Activated CD8-positive, alpha-beta T cell treated with anti-CD3 and anti-CD28 coated beads for 36 hours (primary cell): ENCODE measurements at regions of chr3 and their contacts with region 1.

Region 1: GRCh38 chr3:58568572-58569286 is 8.5 kb downstream of the FAM107A start:
- DNase-seq: peak; percentile 83
- ATAC-seq: peak; percentile 61
- H3K4me3 Mint-ChIP-seq: no peak overlapping the region
- H3K27ac Mint-ChIP-seq: no peak overlapping the region
- H3K4me1 Mint-ChIP-seq: peaks cover 4% of the 10 kb centered on the region
- H3K27me3 Mint-ChIP-seq: peaks cover 1% of the 10 kb centered on the region
- CTCF ChIP-seq: peak; percentile 94

Region 2: GRCh38 chr3:58556761-58557221 is 11.9 kb before region 1 on chr3:
- CTCF ChIA-PET with region 1: interaction called, 49 read pairs
- POLR2A ChIA-PET with region 1: no interaction called
- intact Hi-C with region 1: no loop called
- DNase-seq: no peak
- ATAC-seq: no peak
- H3K4me3 Mint-ChIP-seq: no peak overlapping the region
- H3K27ac Mint-ChIP-seq: no peak overlapping the region
- H3K4me1 Mint-ChIP-seq: no peaks in the 10 kb centered on the region
- H3K27me3 Mint-ChIP-seq: no peaks in the 10 kb centered on the region
- CTCF ChIP-seq: no peak

Region 3: DNA sequence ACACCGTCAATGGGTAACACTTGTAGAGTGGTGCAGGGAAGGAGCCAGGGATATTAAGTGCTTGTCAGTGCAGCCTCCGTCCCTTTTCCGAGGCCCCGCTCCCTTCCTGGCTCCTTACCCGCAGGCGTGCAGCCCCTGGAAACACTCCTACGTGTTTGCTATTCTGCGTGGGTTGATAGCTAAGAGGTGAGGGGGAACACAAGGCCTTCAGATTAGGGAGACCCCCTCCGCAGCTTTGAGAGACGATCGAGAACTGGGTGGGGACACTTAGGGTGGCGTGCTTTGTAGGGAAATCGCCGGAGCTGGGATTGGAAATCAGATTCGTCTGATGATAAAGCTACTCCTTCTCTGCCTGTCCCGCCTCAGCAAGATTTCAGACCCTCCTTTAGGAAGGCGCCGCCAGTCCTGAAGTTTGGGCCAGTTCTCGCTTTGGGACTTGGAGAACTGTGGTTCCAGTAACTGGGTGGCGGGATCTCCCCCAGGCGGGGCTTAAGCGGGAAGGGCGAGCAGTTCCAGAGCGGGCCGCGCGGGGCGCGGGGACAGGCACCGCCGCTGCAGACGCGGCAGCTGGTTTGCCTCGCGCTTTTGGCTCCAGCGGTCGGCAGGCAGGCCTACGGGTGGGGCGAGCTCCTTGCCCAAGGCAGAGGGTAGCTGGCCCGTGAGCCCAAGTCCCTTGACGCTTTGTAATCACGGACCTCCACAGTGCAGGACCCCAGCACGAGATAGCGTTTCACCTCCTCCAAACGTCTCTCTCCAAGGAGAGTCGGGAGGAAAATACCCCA is 16.5 kb after region 1 on chr3:
- CTCF ChIA-PET with region 1: interaction called, 23 read pairs
- POLR2A ChIA-PET with region 1: no interaction called
- intact Hi-C with region 1: no loop called
- DNase-seq: peak; percentile 63
- ATAC-seq: peak; percentile 85
- H3K4me3 Mint-ChIP-seq: peak overlapping the region; percentile 73
- H3K27ac Mint-ChIP-seq: no peak overlapping the region
- H3K4me1 Mint-ChIP-seq: peaks cover 13% of the 10 kb centered on the region
- H3K27me3 Mint-ChIP-seq: peaks cover 39% of the 10 kb centered on the region
- CTCF ChIP-seq: peak; percentile 56